CD8-positive, alpha-beta T cell (primary cell): ENCODE measurements at regions of chr5 and their contacts with region 1.

Region 1: GRCh38 chr5:96946381-96946780 is 10.5 kb downstream of the LNPEP start:
- DNase-seq: no peak
- ATAC-seq: no peak
- H3K4me3 ChIP-seq: no peak overlapping the region
- H3K4me3 Mint-ChIP-seq: no peak overlapping the region
- H3K27ac ChIP-seq: no peak overlapping the region
- H3K27ac Mint-ChIP-seq: peak overlapping the region; percentile 73
- H3K4me1 ChIP-seq: peaks cover 51% of the 10 kb centered on the region
- H3K4me1 Mint-ChIP-seq: peaks cover 80% of the 10 kb centered on the region
- H3K27me3 ChIP-seq: no peaks in the 10 kb centered on the region
- H3K27me3 Mint-ChIP-seq: no peaks in the 10 kb centered on the region
- CTCF ChIP-seq: no peak

Region 2: DNA sequence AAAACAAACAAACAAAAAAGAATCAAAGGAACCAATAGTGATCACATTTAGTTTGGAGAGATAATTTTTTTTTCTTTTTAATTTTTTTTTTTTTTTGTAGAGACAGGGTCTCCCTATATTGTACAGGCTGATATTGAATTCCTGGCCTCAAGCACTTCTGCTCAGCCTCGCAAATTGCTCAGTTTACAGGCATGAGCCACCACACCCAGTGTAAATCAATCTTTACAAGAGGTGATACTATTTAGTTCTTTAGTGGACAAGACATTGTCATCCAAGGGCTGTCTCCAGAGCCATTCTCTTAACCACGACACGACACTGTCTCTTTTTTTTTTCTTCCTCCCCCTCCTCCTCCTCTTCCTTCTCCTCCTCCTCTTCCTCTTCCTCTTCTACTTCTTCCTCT is 40.5 kb before region 1 on chr5:
- CTCF ChIA-PET with region 1: no interaction called
- POLR2A ChIA-PET with region 1: no interaction called
- intact Hi-C with region 1: no loop called
- DNase-seq: no peak
- ATAC-seq: no peak
- H3K4me3 ChIP-seq: no peak overlapping the region
- H3K4me3 Mint-ChIP-seq: no peak overlapping the region
- H3K27ac ChIP-seq: no peak overlapping the region
- H3K27ac Mint-ChIP-seq: peak overlapping the region; percentile 55
- H3K4me1 ChIP-seq: peaks cover 7% of the 10 kb centered on the region
- H3K4me1 Mint-ChIP-seq: peaks cover 11% of the 10 kb centered on the region
- H3K27me3 ChIP-seq: no peaks in the 10 kb centered on the region
- H3K27me3 Mint-ChIP-seq: no peaks in the 10 kb centered on the region
- CTCF ChIP-seq: no peak

Region 3: GRCh38 chr5:96963267-96963666 is 16.9 kb after region 1 on chr5:
- CTCF ChIA-PET with region 1: interaction called, 3 read pairs
- POLR2A ChIA-PET with region 1: interaction called, 5 read pairs
- intact Hi-C with region 1: loop called in 1 of 2 experiments (anchors 2 kb)
- DNase-seq: peak in 4 of 9 experiments; percentile 22 to 58 (median 26)
- ATAC-seq: peak; percentile 39
- H3K4me3 ChIP-seq: no peak overlapping the region
- H3K4me3 Mint-ChIP-seq: peak overlapping the region; percentile 68
- H3K27ac ChIP-seq: peak overlapping the region; percentile 30 to 44
- H3K27ac Mint-ChIP-seq: peak overlapping the region; percentile 94
- H3K4me1 ChIP-seq: peaks cover 68% of the 10 kb centered on the region
- H3K4me1 Mint-ChIP-seq: peaks cover 80% of the 10 kb centered on the region
- H3K27me3 ChIP-seq: no peaks in the 10 kb centered on the region
- H3K27me3 Mint-ChIP-seq: no peaks in the 10 kb centered on the region
- CTCF ChIP-seq: no peak